Activated CD4-positive, alpha-beta T cell treated with anti-CD3 and anti-CD28 coated beads, Interleukin-2, amount 10 ng/mL, durations not matched to agents 24 days and 14 days (primary cell): ENCODE measurements at regions of chr1 and their contacts with region 1.

Region 1: GRCh38 chr1:15128520-15129313 is 24.8 kb upstream of the TMEM51 start:
- DNase-seq: peak; percentile 92
- H3K4me3 Mint-ChIP-seq: no peak overlapping the region
- H3K27ac Mint-ChIP-seq: no peak overlapping the region
- H3K4me1 Mint-ChIP-seq: no peaks in the 10 kb centered on the region
- H3K27me3 Mint-ChIP-seq: peaks cover 26% of the 10 kb centered on the region

Region 2: GRCh38 chr1:15272009-15272788 is 143.5 kb after region 1 on chr1:
- intact Hi-C with region 1: loop called (anchors 1 kb)
- DNase-seq: peak; percentile 80
- H3K4me3 Mint-ChIP-seq: no peak overlapping the region
- H3K27ac Mint-ChIP-seq: no peak overlapping the region
- H3K4me1 Mint-ChIP-seq: peaks cover 5% of the 10 kb centered on the region
- H3K27me3 Mint-ChIP-seq: peaks cover 33% of the 10 kb centered on the region

Region 3: DNA sequence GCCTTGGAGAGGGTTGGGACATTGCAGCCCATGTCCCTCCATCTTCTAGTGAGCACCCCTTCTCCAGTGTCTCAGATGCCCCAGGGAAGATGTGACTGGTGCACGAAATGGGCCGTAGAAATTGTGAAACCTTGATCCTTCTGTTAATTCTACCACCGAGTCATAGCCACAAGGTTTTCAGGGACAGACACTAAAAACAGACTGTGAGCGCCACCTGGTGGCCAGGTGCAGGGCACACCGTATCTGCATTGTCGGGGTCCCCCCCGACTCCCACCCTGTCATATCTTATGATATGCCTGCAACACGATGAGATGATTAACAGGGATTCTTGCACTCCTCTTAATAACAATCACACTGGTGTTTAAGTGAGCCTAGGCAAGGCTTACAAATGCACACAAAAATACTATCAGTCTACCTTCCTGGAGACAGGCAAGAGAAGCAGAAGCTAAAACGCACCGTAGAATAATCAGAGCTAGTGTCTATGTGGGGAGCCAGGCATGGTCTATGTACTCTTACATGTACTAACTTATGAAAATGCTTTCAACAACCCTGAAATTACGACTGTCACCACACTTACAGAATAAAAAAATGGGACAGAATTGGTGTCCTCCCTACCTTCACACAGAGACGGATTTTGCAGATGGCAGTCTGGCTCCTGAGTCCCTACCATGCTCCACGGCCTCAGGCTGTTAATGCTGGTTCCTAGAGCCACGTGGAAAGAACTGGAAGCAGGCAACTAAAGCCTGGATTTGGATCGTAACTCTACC is 176.2 kb after region 1 on chr1:
- intact Hi-C with region 1: loop called (anchors 1 kb)
- DNase-seq: peak; percentile 89
- H3K4me3 Mint-ChIP-seq: no peak overlapping the region
- H3K27ac Mint-ChIP-seq: no peak overlapping the region
- H3K4me1 Mint-ChIP-seq: no peaks in the 10 kb centered on the region
- H3K27me3 Mint-ChIP-seq: peaks cover 11% of the 10 kb centered on the region

Region 4: GRCh38 chr1:15430787-15431570 is 302.3 kb after region 1 on chr1:
- intact Hi-C with region 1: loop called (anchors 10 kb)
- DNase-seq: peak; percentile 92
- H3K4me3 Mint-ChIP-seq: no peak overlapping the region
- H3K27ac Mint-ChIP-seq: no peak overlapping the region
- H3K4me1 Mint-ChIP-seq: peaks cover 12% of the 10 kb centered on the region
- H3K27me3 Mint-ChIP-seq: no peaks in the 10 kb centered on the region